Activated T-helper 1 cell treated with anti-CD3 and anti-CD28 coated beads, Interleukin-12 subunit alpha, Interleukin-12 subunit beta, Interleukin-2, Interleukin-4 antibody, amounts not matched to agents 30 ng/mL and 10 ng/mL and 1 ng/mL, durations not matched to agents 14 hours and 24 hours and 36 hours (primary cell): ENCODE measurements at regions of chr13 and their contacts with region 1.

Region 1: DNA sequence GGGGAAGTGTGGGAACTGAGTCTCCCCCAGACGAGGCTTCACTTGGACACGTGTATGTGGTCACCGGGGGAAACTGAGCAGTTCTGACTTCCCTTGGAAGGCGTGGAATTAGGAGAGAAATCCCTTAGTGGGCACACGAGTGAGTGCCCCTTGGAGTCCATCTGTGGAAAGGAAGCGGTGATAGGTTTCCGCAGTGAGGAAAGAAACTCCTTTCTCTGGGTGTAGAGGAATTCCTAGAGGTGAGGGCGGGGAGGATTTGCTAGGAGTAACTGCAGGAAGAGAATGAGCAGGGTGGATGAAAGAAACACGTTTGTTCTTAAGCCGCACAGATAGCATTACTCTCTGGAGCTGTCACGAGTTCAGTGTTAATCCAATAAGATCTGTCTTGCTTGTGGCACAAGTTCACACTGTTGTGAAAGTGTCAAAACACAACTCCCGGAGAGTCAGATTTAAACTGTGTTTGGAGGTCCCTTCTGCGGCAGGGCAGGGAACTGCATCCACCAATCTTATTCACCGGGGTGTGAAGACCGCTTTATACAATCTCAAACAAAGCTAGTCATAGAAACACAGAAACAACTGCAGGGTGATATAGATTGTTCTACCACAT is 1.2 kb downstream of the KL start:
- DNase-seq: peak; percentile 29
- H3K4me3 Mint-ChIP-seq: peak overlapping the region; percentile 78
- H3K27ac Mint-ChIP-seq: peak overlapping the region; percentile 41
- H3K4me1 Mint-ChIP-seq: peaks cover 21% of the 10 kb centered on the region
- H3K27me3 Mint-ChIP-seq: peaks cover 56% of the 10 kb centered on the region

Region 2: GRCh38 chr13:32650705-32651311 is 366.6 kb before region 1 on chr13:
- intact Hi-C with region 1: loop called (anchors 10 kb)
- DNase-seq: peak; percentile 42
- H3K4me3 Mint-ChIP-seq: no peak overlapping the region
- H3K27ac Mint-ChIP-seq: no peak overlapping the region
- H3K4me1 Mint-ChIP-seq: peaks cover 52% of the 10 kb centered on the region
- H3K27me3 Mint-ChIP-seq: no peaks in the 10 kb centered on the region

Region 3: DNA sequence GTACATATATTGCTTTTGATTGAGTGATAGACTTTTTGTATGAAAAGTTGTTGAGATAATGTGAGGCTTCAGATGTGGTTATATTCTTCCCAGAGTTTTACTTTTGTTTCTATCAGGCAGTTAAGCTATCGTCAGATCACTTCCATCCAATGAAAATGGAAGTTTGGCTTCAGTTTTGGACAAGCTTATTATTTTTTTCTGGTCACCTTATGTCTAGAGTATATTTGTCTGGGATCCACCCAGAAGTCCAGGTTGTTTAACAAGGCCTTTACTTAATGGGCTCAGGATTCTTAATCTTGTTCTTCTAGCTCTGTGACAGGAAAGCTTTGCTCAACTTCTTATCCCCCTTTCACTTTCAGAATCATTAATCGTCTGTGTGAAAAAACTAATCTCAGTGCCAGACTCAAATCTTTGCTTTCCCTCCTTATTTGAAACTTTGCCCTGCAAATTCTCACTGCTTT is 280.3 kb before region 1 on chr13:
- intact Hi-C with region 1: loop called (anchors 2 kb)
- DNase-seq: no peak
- H3K4me3 Mint-ChIP-seq: peak overlapping the region; percentile 74
- H3K27ac Mint-ChIP-seq: peak overlapping the region; percentile 80
- H3K4me1 Mint-ChIP-seq: peaks cover 38% of the 10 kb centered on the region
- H3K27me3 Mint-ChIP-seq: no peaks in the 10 kb centered on the region

Region 4: DNA sequence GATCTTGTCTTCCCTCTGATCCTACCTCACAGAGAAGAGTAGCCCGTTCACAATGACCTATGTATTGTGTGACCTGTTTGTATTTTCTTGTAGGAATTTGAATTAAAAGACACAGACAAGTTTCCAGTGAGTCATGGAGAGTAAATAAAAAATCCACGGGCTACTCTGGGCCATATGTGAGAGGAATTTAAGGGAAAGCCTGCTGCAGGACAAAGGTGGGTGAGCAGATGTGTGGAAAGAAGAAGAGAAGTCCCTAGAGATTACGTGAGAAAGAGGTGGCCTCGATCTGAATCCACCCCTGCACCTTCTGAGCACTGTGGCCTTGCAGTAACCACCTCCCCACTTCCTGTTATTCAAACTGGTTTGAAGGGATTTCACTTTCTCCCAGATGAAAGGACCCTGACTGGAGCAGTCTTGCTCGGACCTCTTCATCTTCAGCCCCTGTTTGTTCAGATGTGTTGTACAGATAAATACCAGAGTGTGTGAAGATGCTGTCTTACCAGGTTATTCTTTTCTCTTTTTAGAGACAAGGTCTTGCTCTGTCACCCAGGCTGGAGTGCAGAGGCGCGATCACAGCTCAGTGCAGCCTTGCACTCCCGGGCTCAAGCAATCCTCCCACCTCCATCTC is 225.8 kb before region 1 on chr13:
- intact Hi-C with region 1: loop called (anchors 10 kb)
- DNase-seq: peak; percentile 33
- H3K4me3 Mint-ChIP-seq: peak overlapping the region; percentile 50
- H3K27ac Mint-ChIP-seq: peak overlapping the region; percentile 46
- H3K4me1 Mint-ChIP-seq: peaks cover 33% of the 10 kb centered on the region
- H3K27me3 Mint-ChIP-seq: no peaks in the 10 kb centered on the region

Region 5: DNA sequence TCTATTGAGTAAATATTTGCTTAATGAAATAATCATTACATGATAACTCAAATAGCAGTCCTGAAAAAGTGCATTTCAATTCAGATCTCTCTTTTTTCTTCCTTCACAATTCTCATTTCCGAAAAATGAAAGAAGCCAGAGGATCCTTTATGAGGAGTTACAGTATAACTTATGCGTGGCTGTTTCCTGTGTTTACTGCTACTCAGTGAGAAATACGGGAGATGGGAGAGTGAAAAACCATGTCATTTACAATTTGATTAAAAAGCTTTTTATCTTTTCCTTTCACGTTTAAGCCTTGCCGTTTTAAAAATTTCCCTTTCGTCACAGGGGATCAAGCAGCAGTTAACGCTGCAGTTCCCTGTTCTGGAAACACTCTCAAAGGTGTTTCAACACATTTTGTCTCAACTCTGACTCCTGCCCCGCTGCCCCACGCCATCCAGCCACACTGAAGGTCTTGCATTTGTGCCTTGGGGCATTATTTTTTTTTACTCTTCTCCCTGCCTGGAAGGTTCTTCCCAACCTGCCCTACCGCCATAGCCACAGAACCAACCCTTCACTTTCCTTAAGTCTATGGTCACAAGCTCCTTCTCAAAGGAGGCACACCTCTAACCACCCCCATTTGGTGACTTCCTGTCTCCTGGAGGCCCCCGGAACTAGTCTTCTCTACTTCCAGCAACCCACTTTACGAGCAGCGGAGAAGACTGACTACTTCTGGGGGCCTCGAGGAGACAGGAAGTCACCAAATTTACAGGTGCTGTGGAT is 15.8 kb after region 1 on chr13:
- intact Hi-C with region 1: loop called (anchors 2 kb)
- DNase-seq: no peak
- H3K4me3 Mint-ChIP-seq: peak overlapping the region; percentile 83
- H3K27ac Mint-ChIP-seq: peak overlapping the region; percentile 94
- H3K4me1 Mint-ChIP-seq: peaks cover 13% of the 10 kb centered on the region
- H3K27me3 Mint-ChIP-seq: peaks cover 2% of the 10 kb centered on the region

Region 6: GRCh38 chr13:33087091-33087490 is 69.7 kb after region 1 on chr13:
- intact Hi-C with region 1: loop called (anchors 5 kb)
- DNase-seq: no peak
- H3K4me3 Mint-ChIP-seq: no peak overlapping the region
- H3K27ac Mint-ChIP-seq: peak overlapping the region; percentile 69
- H3K4me1 Mint-ChIP-seq: peaks cover 20% of the 10 kb centered on the region
- H3K27me3 Mint-ChIP-seq: peaks cover 2% of the 10 kb centered on the region